ENCODE measurements at regions of chr13 and their contacts with region 1.

Region 1: DNA sequence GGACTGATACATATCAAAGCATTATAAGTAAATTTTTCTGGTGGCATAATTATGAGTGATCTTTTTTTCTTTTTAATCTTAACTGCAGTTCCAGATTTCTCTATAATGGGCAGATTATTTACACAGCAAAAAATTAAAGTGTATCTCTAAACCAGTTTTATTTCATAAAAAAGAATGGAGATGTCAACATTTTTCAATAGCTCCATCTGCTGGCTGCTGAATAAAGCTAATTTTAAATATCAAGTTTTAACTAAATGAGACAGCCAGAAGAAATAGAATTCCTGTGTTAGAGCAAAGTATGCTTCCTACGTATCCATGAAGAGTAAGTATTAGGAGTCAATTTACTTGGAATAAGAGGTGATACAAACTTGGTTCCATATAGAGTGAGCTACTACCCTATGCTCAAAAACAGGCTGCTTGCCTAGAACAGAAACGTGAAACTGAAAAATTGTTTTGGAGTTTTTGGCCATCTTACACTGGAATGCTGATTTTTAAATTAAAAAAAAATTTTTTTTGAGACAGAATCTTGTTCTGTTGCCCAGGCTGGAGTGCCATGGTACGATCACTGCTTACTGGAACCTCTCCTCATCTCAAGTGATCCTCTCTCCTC is 5.0 kb upstream of the PDS5B start:
- DNase-seq: no peak
- H3K4me3 Mint-ChIP-seq: no peak overlapping the region
- H3K27ac Mint-ChIP-seq: no peak overlapping the region
- H3K4me1 Mint-ChIP-seq: peaks cover 9% of the 10 kb centered on the region
- H3K27me3 Mint-ChIP-seq: no peaks in the 10 kb centered on the region

Region 2: GRCh38 chr13:31909864-31910551 is 671.3 kb before region 1 on chr13:
- CTCF ChIA-PET with region 1: interaction called, 9 read pairs
- intact Hi-C with region 1: loop called (anchors 1 kb)
- DNase-seq: peak; percentile 63
- H3K4me3 Mint-ChIP-seq: no peak overlapping the region
- H3K27ac Mint-ChIP-seq: no peak overlapping the region
- H3K4me1 Mint-ChIP-seq: no peaks in the 10 kb centered on the region
- H3K27me3 Mint-ChIP-seq: peaks cover 3% of the 10 kb centered on the region

Region 3: GRCh38 chr13:32164622-32165268 is 416.5 kb before region 1 on chr13:
- CTCF ChIA-PET with region 1: interaction called, 7 read pairs
- intact Hi-C with region 1: loop called (anchors 2 kb)
- DNase-seq: peak; percentile 32
- H3K4me3 Mint-ChIP-seq: no peak overlapping the region
- H3K27ac Mint-ChIP-seq: no peak overlapping the region
- H3K4me1 Mint-ChIP-seq: no peaks in the 10 kb centered on the region
- H3K27me3 Mint-ChIP-seq: no peaks in the 10 kb centered on the region

Region 4: GRCh38 chr13:32267836-32268439 is 313.3 kb before region 1 on chr13:
- CTCF ChIA-PET with region 1: interaction called, 5 read pairs
- intact Hi-C with region 1: loop called (anchors 1 kb)
- DNase-seq: peak; percentile 67
- H3K4me3 Mint-ChIP-seq: no peak overlapping the region
- H3K27ac Mint-ChIP-seq: no peak overlapping the region
- H3K4me1 Mint-ChIP-seq: peaks cover 5% of the 10 kb centered on the region
- H3K27me3 Mint-ChIP-seq: no peaks in the 10 kb centered on the region

Region 5: GRCh38 chr13:32419862-32420261 is 161.4 kb before region 1 on chr13:
- CTCF ChIA-PET with region 1: no interaction called
- intact Hi-C with region 1: no loop called
- DNase-seq: no peak
- H3K4me3 Mint-ChIP-seq: no peak overlapping the region
- H3K27ac Mint-ChIP-seq: no peak overlapping the region
- H3K4me1 Mint-ChIP-seq: peaks cover 18% of the 10 kb centered on the region
- H3K27me3 Mint-ChIP-seq: no peaks in the 10 kb centered on the region

Region 6: DNA sequence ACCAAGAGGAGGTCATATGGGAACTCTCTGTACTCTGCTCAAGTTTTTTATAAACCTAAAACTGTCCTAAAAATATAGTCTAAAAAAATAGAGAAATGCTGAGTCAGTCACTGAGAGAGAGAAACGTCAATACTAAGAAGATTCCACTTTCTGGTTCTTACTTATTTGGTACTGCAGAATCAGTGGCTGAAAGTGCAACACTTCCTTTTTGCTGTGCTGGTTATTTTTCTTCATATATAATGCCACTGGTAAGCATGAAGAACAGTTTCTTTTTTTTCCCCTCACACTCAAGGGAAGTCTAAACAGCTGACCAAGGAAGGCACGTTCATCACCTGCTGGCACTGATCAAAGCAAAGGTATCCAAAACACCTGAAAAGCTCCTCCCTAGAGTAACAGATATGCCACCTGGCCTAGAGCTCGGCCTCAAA is 109.1 kb before region 1 on chr13:
- CTCF ChIA-PET with region 1: interaction called, 14 read pairs
- intact Hi-C with region 1: loop called (anchors 1 kb)
- DNase-seq: no peak
- H3K4me3 Mint-ChIP-seq: no peak overlapping the region
- H3K27ac Mint-ChIP-seq: no peak overlapping the region
- H3K4me1 Mint-ChIP-seq: peaks cover 3% of the 10 kb centered on the region
- H3K27me3 Mint-ChIP-seq: no peaks in the 10 kb centered on the region

Measured in activated naive CD4-positive, alpha-beta T cell treated with anti-CD3 and anti-CD28 coated beads for 36 hours (primary cell).